Activated CD4-positive, alpha-beta memory T cell treated with anti-CD3 and anti-CD28 coated beads, Interleukin-2, amount 10 ng/mL, durations not matched to agents 7 days and 5 days (primary cell): ENCODE measurements at regions of chr20 and their contacts with region 1.

Region 1: DNA sequence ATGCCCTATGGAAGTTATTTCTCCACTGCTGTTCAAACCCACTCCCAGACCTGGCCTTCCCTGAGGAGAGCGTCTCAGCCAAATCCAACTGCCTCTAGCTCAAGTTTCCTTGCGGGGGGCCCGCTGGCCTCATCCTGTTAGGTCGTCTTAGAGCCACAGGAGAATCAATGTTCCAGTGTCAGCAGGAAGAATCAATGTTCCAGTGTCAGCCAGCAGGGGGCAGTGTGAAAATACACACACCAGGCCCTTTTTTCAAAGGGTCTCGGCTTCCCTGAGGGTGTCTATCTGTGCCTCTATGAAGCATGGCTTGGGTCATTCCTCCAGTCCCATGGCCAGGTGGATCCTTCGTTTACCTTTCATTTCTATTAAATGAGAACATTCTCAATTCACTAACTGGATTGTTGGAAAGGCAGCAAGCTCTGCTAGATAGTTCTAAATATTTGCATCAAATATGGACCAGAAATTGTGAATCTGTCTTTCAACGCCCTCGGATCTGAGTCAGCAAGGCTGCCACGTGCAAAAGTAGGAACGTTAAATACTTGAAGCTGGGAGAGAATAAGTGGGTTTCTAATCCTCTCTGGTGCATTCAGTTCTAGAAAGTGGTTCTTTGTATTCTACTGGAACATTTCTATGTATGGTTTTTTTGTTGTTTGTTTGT is 19.2 kb downstream of the PRND start:
- DNase-seq: peak; percentile 70
- H3K4me3 Mint-ChIP-seq: no peak overlapping the region
- H3K27ac Mint-ChIP-seq: no peak overlapping the region
- H3K4me1 Mint-ChIP-seq: peaks cover 2% of the 10 kb centered on the region
- H3K27me3 Mint-ChIP-seq: peaks cover 13% of the 10 kb centered on the region

Region 2: GRCh38 chr20:4601630-4602296 is 139.1 kb before region 1 on chr20:
- CTCF ChIA-PET with region 1: interaction called, 11 read pairs
- POLR2A ChIA-PET with region 1: no interaction called
- DNase-seq: no peak
- H3K4me3 Mint-ChIP-seq: no peak overlapping the region
- H3K27ac Mint-ChIP-seq: no peak overlapping the region
- H3K4me1 Mint-ChIP-seq: no peaks in the 10 kb centered on the region
- H3K27me3 Mint-ChIP-seq: peaks cover 53% of the 10 kb centered on the region

Region 3: DNA sequence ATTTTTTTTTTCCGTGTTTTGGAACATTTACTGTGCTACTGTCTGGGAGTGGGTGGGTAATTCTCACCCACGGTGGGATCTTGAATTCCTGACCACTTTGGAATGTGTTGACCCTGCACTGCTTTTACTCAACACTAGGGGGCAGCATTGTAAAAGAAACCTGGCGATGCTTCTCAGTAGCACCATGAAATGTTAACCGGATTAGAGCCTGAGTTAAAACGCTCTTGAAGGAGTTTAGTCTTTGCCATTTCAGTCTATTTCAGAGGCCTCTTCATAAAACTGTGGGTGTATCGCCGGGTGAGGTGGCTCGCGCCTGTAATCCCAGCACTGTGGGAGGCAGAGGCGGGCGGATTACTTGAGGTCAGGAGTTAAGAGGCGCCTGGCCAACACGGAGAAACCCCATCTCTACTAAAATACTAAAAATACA is 133.6 kb before region 1 on chr20:
- CTCF ChIA-PET with region 1: interaction called, 11 read pairs
- POLR2A ChIA-PET with region 1: no interaction called
- DNase-seq: peak; percentile 60
- H3K4me3 Mint-ChIP-seq: no peak overlapping the region
- H3K27ac Mint-ChIP-seq: no peak overlapping the region
- H3K4me1 Mint-ChIP-seq: no peaks in the 10 kb centered on the region
- H3K27me3 Mint-ChIP-seq: peaks cover 27% of the 10 kb centered on the region

Region 4: DNA sequence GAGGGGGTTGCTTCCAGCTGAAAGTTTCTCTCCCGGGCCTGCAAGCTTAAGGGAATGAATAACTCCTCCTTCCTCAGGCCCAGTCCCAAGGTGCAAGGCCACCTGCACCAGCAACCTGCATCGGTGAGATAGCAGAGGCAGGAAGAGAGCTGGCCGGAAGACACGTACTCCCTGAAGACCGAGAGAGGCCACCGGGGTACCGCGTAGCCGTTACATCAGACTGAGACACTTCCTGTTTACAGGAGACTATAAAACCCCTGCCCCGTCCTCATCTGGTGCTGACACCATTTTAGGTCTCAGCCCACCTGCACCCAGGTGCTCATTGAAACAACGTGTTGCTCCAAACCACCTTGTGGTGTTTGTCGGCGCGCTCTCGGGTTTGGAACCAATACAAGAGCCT is 79.7 kb before region 1 on chr20:
- CTCF ChIA-PET with region 1: no interaction called
- POLR2A ChIA-PET with region 1: no interaction called
- DNase-seq: peak; percentile 48
- H3K4me3 Mint-ChIP-seq: no peak overlapping the region
- H3K27ac Mint-ChIP-seq: peak overlapping the region; percentile 62
- H3K4me1 Mint-ChIP-seq: peaks cover 55% of the 10 kb centered on the region
- H3K27me3 Mint-ChIP-seq: peaks cover 3% of the 10 kb centered on the region

Region 5: DNA sequence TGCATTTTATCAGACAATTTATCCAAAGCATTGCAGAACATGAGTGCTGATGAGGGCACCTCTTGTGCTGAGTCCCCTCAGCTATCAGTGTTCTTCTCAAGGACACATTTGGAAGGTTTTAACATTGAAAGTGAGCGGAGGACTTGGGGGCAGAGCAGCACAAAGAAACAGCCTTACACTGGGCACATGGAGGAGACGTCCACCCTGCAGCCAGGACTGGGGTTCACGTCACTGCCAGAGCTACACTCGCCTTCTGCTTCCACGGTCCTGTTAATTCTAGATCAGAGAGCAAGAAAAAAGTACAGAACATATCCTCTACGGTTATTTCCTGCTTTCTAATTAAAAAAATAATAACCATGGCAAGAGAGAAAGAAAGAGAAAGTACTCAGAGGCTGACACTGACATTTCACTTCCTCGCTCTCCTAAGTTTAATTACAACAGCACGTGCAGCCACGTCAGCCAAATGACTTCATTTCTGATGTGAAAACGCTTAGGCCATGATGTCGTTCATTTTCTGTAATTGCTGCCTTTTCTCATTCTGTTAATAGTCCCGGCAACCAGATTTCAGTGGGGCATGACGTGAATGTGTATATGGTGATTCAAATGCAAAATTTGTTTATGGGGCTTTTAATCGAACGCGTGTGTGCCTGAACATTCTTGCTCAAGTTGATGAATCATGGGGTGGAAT is 14.0 kb before region 1 on chr20:
- CTCF ChIA-PET with region 1: interaction called, 15 read pairs
- POLR2A ChIA-PET with region 1: interaction called, 3 read pairs
- DNase-seq: peak; percentile 62
- H3K4me3 Mint-ChIP-seq: peak overlapping the region; percentile 19
- H3K27ac Mint-ChIP-seq: no peak overlapping the region
- H3K4me1 Mint-ChIP-seq: peaks cover 12% of the 10 kb centered on the region
- H3K27me3 Mint-ChIP-seq: peaks cover 5% of the 10 kb centered on the region

Region 6: DNA sequence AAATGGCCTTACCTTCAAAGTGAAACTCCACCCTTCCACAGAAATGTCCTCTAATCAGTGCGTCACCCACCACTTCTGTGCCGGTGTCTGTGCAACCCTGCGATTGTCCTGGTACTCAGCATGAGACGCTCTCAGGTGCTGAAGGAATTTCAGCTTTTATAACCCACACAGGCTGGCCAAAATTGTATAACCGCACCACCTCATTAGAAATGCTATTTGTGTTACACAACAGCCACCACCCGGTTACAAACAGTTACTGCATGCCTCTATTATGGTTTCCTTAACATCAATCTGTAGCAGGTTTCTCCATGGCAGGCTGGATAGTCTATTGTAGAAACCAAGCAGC is 208.9 kb after region 1 on chr20:
- CTCF ChIA-PET with region 1: interaction called, 28 read pairs
- POLR2A ChIA-PET with region 1: no interaction called
- DNase-seq: peak; percentile 38
- H3K4me3 Mint-ChIP-seq: peak overlapping the region; percentile 64
- H3K27ac Mint-ChIP-seq: peak overlapping the region; percentile 36
- H3K4me1 Mint-ChIP-seq: peaks cover 32% of the 10 kb centered on the region
- H3K27me3 Mint-ChIP-seq: no peaks in the 10 kb centered on the region

Region 7: GRCh38 chr20:4956200-4956810 is 215.4 kb after region 1 on chr20:
- CTCF ChIA-PET with region 1: interaction called, 28 read pairs
- POLR2A ChIA-PET with region 1: no interaction called
- DNase-seq: no peak
- H3K4me3 Mint-ChIP-seq: no peak overlapping the region
- H3K27ac Mint-ChIP-seq: no peak overlapping the region
- H3K4me1 Mint-ChIP-seq: peaks cover 9% of the 10 kb centered on the region
- H3K27me3 Mint-ChIP-seq: no peaks in the 10 kb centered on the region